Prostate gland (tissue), 2 donors: ENCODE measurements at regions of chr3 and their contacts with region 1.

Region 1: GRCh38 chr3:64533617-64534317 is 154.0 kb downstream of the ADAMTS9 start:
- DNase-seq: peak; percentile 91
- H3K4me3 ChIP-seq: no peak overlapping the region
- H3K27ac ChIP-seq: peak overlapping the region; percentile 32 to 44
- H3K4me1 ChIP-seq: no peaks in the 10 kb centered on the region
- H3K27me3 ChIP-seq: no peaks in the 10 kb centered on the region
- CTCF ChIP-seq: peak; percentile 67 to 93 (median 86)
- POLR2A ChIP-seq: no peak

Region 2: GRCh38 chr3:64023187-64023848 is 510.4 kb before region 1 on chr3 and contains the start of gene PSMD6:
- intact Hi-C with region 1: no loop called
- DNase-seq: peak; percentile 72
- H3K4me3 ChIP-seq: peak within 1 kb of the TSS; percentile 75 to 90
- H3K27ac ChIP-seq: peak within 1 kb of the TSS; percentile 69 to 75
- H3K4me1 ChIP-seq: no peaks in the 10 kb centered on the region
- H3K27me3 ChIP-seq: no peaks in the 10 kb centered on the region
- CTCF ChIP-seq: peak; percentile 96 to 99 (median 97)
- POLR2A ChIP-seq: no peak
- total RNA-seq, gene PSMD6: 56.4 to 67.9 TPM

Region 3: GRCh38 chr3:64176461-64176996 is 357.2 kb before region 1 on chr3:
- intact Hi-C with region 1: no loop called
- DNase-seq: no peak
- H3K4me3 ChIP-seq: no peak overlapping the region
- H3K27ac ChIP-seq: no peak overlapping the region
- H3K4me1 ChIP-seq: no peaks in the 10 kb centered on the region
- H3K27me3 ChIP-seq: no peaks in the 10 kb centered on the region
- CTCF ChIP-seq: no peak
- POLR2A ChIP-seq: no peak

Region 4: DNA sequence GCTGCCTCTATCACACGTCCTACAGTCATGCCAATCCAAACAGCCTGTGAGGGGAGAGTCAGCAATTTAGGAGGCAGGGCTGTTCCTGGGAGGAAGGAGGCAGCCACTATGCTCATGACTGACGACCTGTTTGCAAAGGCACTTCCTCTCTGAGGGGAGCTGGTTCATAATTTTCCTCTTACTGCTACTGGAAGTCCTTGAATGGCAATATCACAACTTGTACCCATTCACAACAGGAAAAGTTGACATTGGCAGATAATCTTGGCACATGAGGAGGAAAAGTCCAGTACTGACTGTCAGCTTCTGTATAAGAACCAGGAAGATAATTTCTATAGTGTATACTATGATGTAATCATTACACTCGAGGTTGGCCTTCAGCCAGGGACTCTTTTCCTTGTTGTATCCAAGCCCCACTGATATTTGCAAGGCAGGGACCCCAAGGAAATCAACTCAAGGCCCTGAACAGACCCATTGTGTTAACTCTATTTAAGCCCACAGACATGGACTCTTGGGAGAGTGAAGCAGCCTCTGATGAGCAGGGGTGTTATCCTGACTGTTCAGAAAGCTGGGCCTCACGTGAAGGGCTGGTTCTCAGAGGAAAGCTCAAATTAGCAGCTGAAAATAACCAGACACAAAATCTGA is 421.3 kb after region 1 on chr3:
- intact Hi-C with region 1: loop called (anchors 10 kb)
- DNase-seq: peak; percentile 62
- H3K4me3 ChIP-seq: no peak overlapping the region
- H3K27ac ChIP-seq: peak overlapping the region in 1 of 2 donors; percentile 63
- H3K4me1 ChIP-seq: no peaks in the 10 kb centered on the region
- H3K27me3 ChIP-seq: no peaks in the 10 kb centered on the region
- CTCF ChIP-seq: no peak
- POLR2A ChIP-seq: no peak

Region 5: DNA sequence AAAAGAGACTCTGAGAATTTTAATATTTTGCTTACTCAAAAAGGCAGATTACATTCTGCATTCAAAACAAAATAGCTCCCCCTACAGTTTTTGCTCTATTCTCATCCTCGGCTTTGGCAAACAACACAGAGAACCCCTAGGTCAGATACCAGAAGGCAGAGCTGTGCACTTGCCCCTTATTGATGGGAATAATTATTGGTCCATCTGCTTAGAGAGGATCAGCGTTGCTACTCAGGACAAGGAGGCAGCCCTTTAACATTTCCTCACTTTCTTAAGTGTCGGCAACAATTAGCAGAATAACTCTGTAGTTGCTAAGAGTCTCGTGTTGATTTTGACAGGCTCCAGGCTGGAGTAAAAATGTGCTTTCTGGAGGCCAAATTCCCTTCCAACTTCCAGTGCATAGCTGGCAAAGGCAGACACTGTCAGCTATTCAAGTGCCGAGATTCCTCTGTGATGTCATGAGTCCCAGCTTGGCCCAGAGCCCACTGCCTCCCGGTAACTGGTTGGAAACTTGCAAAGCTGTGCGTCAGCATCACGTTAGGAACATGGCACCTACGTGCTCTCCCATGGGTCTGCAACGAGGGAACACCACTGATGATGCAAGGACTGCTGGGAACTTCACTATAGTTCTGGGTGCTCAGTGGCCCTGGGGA is 636.7 kb after region 1 on chr3:
- intact Hi-C with region 1: loop called (anchors 10 kb)
- DNase-seq: peak; percentile 24
- H3K4me3 ChIP-seq: no peak overlapping the region
- H3K27ac ChIP-seq: no peak overlapping the region
- H3K4me1 ChIP-seq: no peaks in the 10 kb centered on the region
- H3K27me3 ChIP-seq: no peaks in the 10 kb centered on the region
- CTCF ChIP-seq: peak in 3 of 4 experiments; percentile 11 to 29 (median 27)
- POLR2A ChIP-seq: no peak

Region 6: GRCh38 chr3:65371053-65371452 is 837.3 kb after region 1 on chr3:
- intact Hi-C with region 1: no loop called
- DNase-seq: no peak
- H3K4me3 ChIP-seq: no peak overlapping the region
- H3K27ac ChIP-seq: no peak overlapping the region
- H3K4me1 ChIP-seq: no peaks in the 10 kb centered on the region
- H3K27me3 ChIP-seq: no peaks in the 10 kb centered on the region
- CTCF ChIP-seq: no peak
- POLR2A ChIP-seq: no peak

Region 7: GRCh38 chr3:65412588-65412987 is 878.8 kb after region 1 on chr3:
- intact Hi-C with region 1: loop called (anchors 5 kb)
- DNase-seq: peak; percentile 88
- H3K4me3 ChIP-seq: no peak overlapping the region
- H3K27ac ChIP-seq: peak overlapping the region in 1 of 2 donors; percentile 26
- H3K4me1 ChIP-seq: peaks cover 15% of the 10 kb centered on the region
- H3K27me3 ChIP-seq: no peaks in the 10 kb centered on the region
- CTCF ChIP-seq: peak in 3 of 4 experiments; percentile 46 to 62 (median 57)
- POLR2A ChIP-seq: no peak